CD8-positive, alpha-beta memory T cell (primary cell): ENCODE measurements at regions of chr2 and their contacts with region 1.

Region 1: GRCh38 chr2:96320728-96321622 is 4.1 kb upstream of the ITPRIPL1 start:
- DNase-seq: no peak
- H3K4me3 ChIP-seq: peak overlapping the region; percentile 47
- H3K4me3 Mint-ChIP-seq: peak overlapping the region; percentile 86 to 95 (median 91)
- H3K27ac ChIP-seq: peak overlapping the region; percentile 55
- H3K27ac Mint-ChIP-seq: peak overlapping the region; percentile 62 to 96 (median 81)
- H3K4me1 ChIP-seq: peaks cover 32% of the 10 kb centered on the region
- H3K4me1 Mint-ChIP-seq: peaks cover 57 to 76% (median 73%) of the 10 kb centered on the region in 3 donors
- H3K27me3 ChIP-seq: no peaks in the 10 kb centered on the region
- H3K27me3 Mint-ChIP-seq: no peaks in the 10 kb centered on the region

Region 2: GRCh38 chr2:96116879-96117697 is 203.9 kb before region 1 on chr2:
- CTCF ChIA-PET with region 1: no interaction called
- POLR2A ChIA-PET with region 1: no interaction called
- DNase-seq: peak; percentile 48 to 72 (median 63)
- H3K4me3 ChIP-seq: peak overlapping the region; percentile 29
- H3K4me3 Mint-ChIP-seq: peak overlapping the region; percentile 47 to 87 (median 75)
- H3K27ac ChIP-seq: no peak overlapping the region
- H3K27ac Mint-ChIP-seq: peak overlapping the region in 4 of 8 donors; percentile 27 to 47 (median 30)
- H3K4me1 ChIP-seq: peaks cover 7% of the 10 kb centered on the region
- H3K4me1 Mint-ChIP-seq: peaks cover 9 to 35% (median 11%) of the 10 kb centered on the region in 3 donors
- H3K27me3 ChIP-seq: no peaks in the 10 kb centered on the region
- H3K27me3 Mint-ChIP-seq: peaks cover 19% of the 10 kb centered on the region in 2 donors

Region 3: DNA sequence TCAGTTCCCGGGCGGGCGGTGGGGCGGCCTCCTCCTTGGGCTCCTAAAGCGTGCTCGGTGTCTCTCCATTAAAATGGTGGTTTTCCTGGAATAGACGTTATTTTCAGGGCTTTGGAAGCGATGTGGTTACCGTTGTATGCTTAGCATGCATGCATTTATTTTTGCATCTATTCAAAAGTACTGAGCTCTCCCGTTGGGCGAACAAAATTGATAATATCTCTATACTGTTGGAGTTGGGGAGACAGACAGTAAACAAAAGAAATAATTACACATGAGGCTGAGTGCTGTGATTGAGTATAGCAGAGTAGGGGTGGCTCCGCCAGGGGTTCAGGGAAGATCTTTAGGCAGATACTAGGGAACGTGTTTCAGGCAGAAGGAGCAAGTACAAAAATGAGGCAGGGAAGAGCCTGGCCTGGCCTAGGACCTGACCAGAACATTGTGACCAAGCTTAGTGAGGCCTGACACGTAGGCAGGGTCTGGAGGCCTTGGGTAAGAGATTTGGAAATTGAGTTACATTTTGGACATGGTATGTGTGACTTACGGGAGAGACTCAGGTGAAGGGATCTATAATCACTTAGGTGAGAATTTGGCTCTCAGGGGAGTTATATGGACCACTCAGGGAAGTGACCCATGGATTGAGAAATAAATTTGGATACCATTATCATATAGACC is 15.3 kb after region 1 on chr2:
- CTCF ChIA-PET with region 1: interaction called, 58 read pairs
- POLR2A ChIA-PET with region 1: interaction called, 32 read pairs
- DNase-seq: no peak
- H3K4me3 ChIP-seq: peak overlapping the region; percentile 79
- H3K4me3 Mint-ChIP-seq: peak overlapping the region; percentile 68 to 94 (median 80)
- H3K27ac ChIP-seq: peak overlapping the region; percentile 24
- H3K27ac Mint-ChIP-seq: peak overlapping the region; percentile 29 to 100 (median 69)
- H3K4me1 ChIP-seq: peaks cover 12% of the 10 kb centered on the region
- H3K4me1 Mint-ChIP-seq: peaks cover 38 to 66% (median 62%) of the 10 kb centered on the region in 3 donors
- H3K27me3 ChIP-seq: no peaks in the 10 kb centered on the region
- H3K27me3 Mint-ChIP-seq: no peaks in the 10 kb centered on the region